CD8-positive, alpha-beta T cell (primary cell): ENCODE measurements at regions of chr1 and their contacts with region 1.

Region 1: GRCh38 chr1:2840036-2840809 is 38.7 kb upstream of the TTC34 start:
- DNase-seq: peak; percentile 42 to 86 (median 68)
- ATAC-seq: peak; percentile 90
- H3K4me3 ChIP-seq: peak overlapping the region in 1 of 2 experiments; percentile 21
- H3K4me3 Mint-ChIP-seq: peak overlapping the region; percentile 76
- H3K27ac ChIP-seq: peak overlapping the region; percentile 18 to 63
- H3K27ac Mint-ChIP-seq: peak overlapping the region; percentile 81
- H3K4me1 ChIP-seq: peaks cover 17% of the 10 kb centered on the region
- H3K4me1 Mint-ChIP-seq: peaks cover 20% of the 10 kb centered on the region
- H3K27me3 ChIP-seq: no peaks in the 10 kb centered on the region
- H3K27me3 Mint-ChIP-seq: no peaks in the 10 kb centered on the region
- CTCF ChIP-seq: peak; percentile 54

Region 2: GRCh38 chr1:2468041-2468472 is 372.2 kb before region 1 on chr1:
- CTCF ChIA-PET with region 1: no interaction called
- POLR2A ChIA-PET with region 1: no interaction called
- intact Hi-C with region 1: no loop called
- DNase-seq: peak; percentile 15 to 66 (median 60)
- ATAC-seq: peak; percentile 71
- H3K4me3 ChIP-seq: no peak overlapping the region
- H3K4me3 Mint-ChIP-seq: no peak overlapping the region
- H3K27ac ChIP-seq: no peak overlapping the region
- H3K27ac Mint-ChIP-seq: no peak overlapping the region
- H3K4me1 ChIP-seq: peaks cover 5% of the 10 kb centered on the region
- H3K4me1 Mint-ChIP-seq: peaks cover 2% of the 10 kb centered on the region
- H3K27me3 ChIP-seq: peaks cover 0 to 2% of the 10 kb centered on the region in 2 experiments
- H3K27me3 Mint-ChIP-seq: peaks cover 10% of the 10 kb centered on the region
- CTCF ChIP-seq: no peak

Region 3: GRCh38 chr1:2642560-2643413 is 197.4 kb before region 1 on chr1:
- CTCF ChIA-PET with region 1: no interaction called
- POLR2A ChIA-PET with region 1: no interaction called
- intact Hi-C with region 1: loop called (anchors 5 to 10 kb)
- DNase-seq: peak; percentile 88 to 97 (median 96)
- ATAC-seq: peak; percentile 84
- H3K4me3 ChIP-seq: peak overlapping the region; percentile 63 to 95
- H3K4me3 Mint-ChIP-seq: peak overlapping the region; percentile 85
- H3K27ac ChIP-seq: peak overlapping the region; percentile 91 to 93
- H3K27ac Mint-ChIP-seq: peak overlapping the region; percentile 88
- H3K4me1 ChIP-seq: peaks cover 17% of the 10 kb centered on the region
- H3K4me1 Mint-ChIP-seq: peaks cover 13% of the 10 kb centered on the region
- H3K27me3 ChIP-seq: no peaks in the 10 kb centered on the region
- H3K27me3 Mint-ChIP-seq: no peaks in the 10 kb centered on the region
- CTCF ChIP-seq: no peak

Region 4: GRCh38 chr1:2789164-2789985 is 50.8 kb before region 1 on chr1:
- CTCF ChIA-PET with region 1: no interaction called
- POLR2A ChIA-PET with region 1: no interaction called
- intact Hi-C with region 1: no loop called
- DNase-seq: no peak
- ATAC-seq: no peak
- H3K4me3 ChIP-seq: no peak overlapping the region
- H3K4me3 Mint-ChIP-seq: no peak overlapping the region
- H3K27ac ChIP-seq: no peak overlapping the region
- H3K27ac Mint-ChIP-seq: no peak overlapping the region
- H3K4me1 ChIP-seq: peaks cover 9% of the 10 kb centered on the region
- H3K4me1 Mint-ChIP-seq: peaks cover 7% of the 10 kb centered on the region
- H3K27me3 ChIP-seq: peaks cover 10 to 12% of the 10 kb centered on the region in 2 experiments
- H3K27me3 Mint-ChIP-seq: peaks cover 41% of the 10 kb centered on the region
- CTCF ChIP-seq: no peak

Region 5: GRCh38 chr1:2821966-2822620 is 18.1 kb before region 1 on chr1:
- CTCF ChIA-PET with region 1: interaction called, 10 read pairs
- POLR2A ChIA-PET with region 1: no interaction called
- intact Hi-C with region 1: loop called in 1 of 2 experiments (anchors 1 kb)
- DNase-seq: peak in 8 of 9 experiments; percentile 26 to 72 (median 56)
- ATAC-seq: peak; percentile 69
- H3K4me3 ChIP-seq: no peak overlapping the region
- H3K4me3 Mint-ChIP-seq: no peak overlapping the region
- H3K27ac ChIP-seq: no peak overlapping the region
- H3K27ac Mint-ChIP-seq: no peak overlapping the region
- H3K4me1 ChIP-seq: peaks cover 8% of the 10 kb centered on the region
- H3K4me1 Mint-ChIP-seq: peaks cover 2% of the 10 kb centered on the region
- H3K27me3 ChIP-seq: peaks cover 0 to 2% of the 10 kb centered on the region in 2 experiments
- H3K27me3 Mint-ChIP-seq: peaks cover 11% of the 10 kb centered on the region
- CTCF ChIP-seq: peak; percentile 57